ENCODE measurements at regions of chr5 and their contacts with region 1.

Region 1: DNA sequence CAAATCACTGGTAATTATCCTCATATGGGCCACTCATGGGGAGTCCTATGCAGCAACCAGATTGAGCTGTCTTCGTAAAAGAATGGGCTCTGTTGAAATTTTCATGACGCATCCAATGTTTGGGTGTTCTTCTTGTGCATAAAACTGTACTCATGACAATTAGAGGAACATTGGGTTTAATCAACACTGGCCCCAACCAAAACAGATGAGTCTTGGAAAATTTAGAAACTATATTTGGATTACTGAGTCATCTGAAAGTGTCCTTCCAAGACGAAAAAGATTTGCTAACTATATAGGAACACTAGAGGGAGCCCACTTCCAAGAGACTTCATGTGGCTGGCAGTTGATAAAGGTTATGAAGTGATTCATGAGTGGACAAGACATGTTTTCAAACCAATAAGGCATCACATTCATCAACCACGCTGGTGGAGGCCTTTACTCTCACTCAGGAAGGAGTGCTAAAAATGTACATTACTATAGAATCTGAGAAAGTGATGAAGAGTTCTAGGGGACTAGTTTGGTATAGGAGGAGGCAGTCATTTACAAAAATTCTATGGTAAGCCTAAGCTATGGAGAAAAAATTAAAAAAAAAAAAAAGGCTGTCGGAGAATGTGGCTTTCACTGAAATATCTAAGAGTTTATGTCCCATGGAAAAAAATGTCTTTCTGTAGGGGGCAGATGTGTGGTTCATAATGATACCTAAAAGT is 313.5 kb downstream of the PRDM9 start:
- DNase-seq: no peak
- ATAC-seq: peak; percentile 78
- H3K4me3 ChIP-seq: no peak overlapping the region
- H3K27ac ChIP-seq: no peak overlapping the region
- H3K4me1 ChIP-seq: no peaks in the 10 kb centered on the region
- H3K27me3 ChIP-seq: no peaks in the 10 kb centered on the region
- CTCF ChIP-seq: peak; percentile 65; the same call in 1 of the 2 replicates

Region 2: GRCh38 chr5:23994581-23995370 is 173.9 kb after region 1 on chr5:
- CTCF ChIA-PET with region 1: no interaction called
- POLR2A ChIA-PET with region 1: no interaction called
- in situ Hi-C with region 1: no loop called
- intact Hi-C with region 1: loop called (anchors 10 kb)
- DNase-seq: no peak
- ATAC-seq: no peak
- H3K4me3 ChIP-seq: no peak overlapping the region
- H3K27ac ChIP-seq: no peak overlapping the region
- H3K4me1 ChIP-seq: no peaks in the 10 kb centered on the region
- H3K27me3 ChIP-seq: no peaks in the 10 kb centered on the region
- CTCF ChIP-seq: peak; percentile 13; the same call in 1 of the 2 replicates

Region 3: DNA sequence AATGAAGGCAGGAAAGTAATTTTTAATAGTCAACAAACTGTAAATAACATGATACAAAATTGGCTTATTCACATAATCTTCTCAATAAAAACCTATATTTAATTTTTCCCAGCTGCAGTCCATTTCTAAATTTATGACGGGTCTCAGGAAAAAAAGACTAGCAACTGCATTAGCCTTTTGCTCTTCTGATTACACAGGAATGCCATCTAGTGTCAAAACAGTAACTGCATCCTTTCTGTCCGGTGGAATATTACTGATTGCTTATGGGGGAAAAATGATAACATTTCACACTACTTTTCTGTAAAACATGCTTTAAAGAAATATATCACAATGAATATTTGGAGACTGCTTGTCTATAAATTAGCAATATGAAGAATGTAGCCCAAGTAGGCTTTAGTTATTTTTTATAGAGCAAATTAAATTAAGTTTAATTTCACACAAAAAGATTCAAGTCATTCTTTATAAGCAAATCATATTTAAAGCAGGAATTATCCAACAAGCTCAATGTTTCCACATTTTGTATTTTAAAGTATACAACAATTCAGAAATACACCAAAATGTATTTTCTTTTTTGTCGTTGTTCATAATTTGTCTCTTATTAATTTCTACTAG is 289.2 kb after region 1 on chr5:
- CTCF ChIA-PET with region 1: interaction called, 3 read pairs
- POLR2A ChIA-PET with region 1: no interaction called
- in situ Hi-C with region 1: no loop called
- intact Hi-C with region 1: loop called (anchors 2 kb)
- DNase-seq: no peak
- ATAC-seq: no peak
- H3K4me3 ChIP-seq: no peak overlapping the region
- H3K27ac ChIP-seq: no peak overlapping the region
- H3K4me1 ChIP-seq: no peaks in the 10 kb centered on the region
- H3K27me3 ChIP-seq: no peaks in the 10 kb centered on the region
- CTCF ChIP-seq: peak; percentile 65; the same call in 1 of the 2 replicates